Psoas muscle (tissue), 8 donors: ENCODE measurements at regions of chr2 and their contacts with region 1.

Region 1: GRCh38 chr2:175937216-175937615 is 64.9 kb downstream of the LNPK start:
- DNase-seq: no peak
- ATAC-seq: no peak
- H3K4me3 ChIP-seq: no peak overlapping the region
- H3K27ac ChIP-seq: no peak overlapping the region
- H3K4me1 ChIP-seq: peaks cover 1% of the 10 kb centered on the region
- H3K27me3 ChIP-seq: no peaks in the 10 kb centered on the region
- CTCF ChIP-seq: no peak

Region 2: DNA sequence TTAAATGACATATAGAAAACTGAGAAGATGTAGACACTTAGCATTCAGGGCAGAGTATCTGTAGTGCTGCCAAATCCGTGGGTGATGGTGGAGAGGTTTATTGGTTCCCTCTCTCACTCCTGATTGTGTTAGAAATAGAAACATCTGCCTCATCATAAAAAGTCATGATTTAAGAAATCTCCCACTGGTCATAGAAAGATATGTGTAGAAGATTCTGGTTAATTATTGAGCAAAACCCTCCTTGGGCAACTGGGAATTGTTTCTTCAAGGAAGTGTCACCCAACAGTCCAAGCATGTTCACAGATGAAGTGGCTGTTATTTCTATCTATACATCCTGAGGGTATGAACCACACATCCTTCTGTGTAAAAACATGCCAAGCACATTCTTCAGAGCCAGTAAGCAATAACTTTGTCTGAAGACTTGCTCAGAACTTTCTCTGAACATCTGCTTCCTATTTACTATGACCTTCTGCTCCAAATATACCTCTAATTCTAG is 1139.4 kb before region 1 on chr2:
- intact Hi-C with region 1: no loop called
- DNase-seq: no peak
- ATAC-seq: no peak
- H3K4me3 ChIP-seq: no peak overlapping the region
- H3K27ac ChIP-seq: no peak overlapping the region
- H3K4me1 ChIP-seq: no peaks in the 10 kb centered on the region
- H3K27me3 ChIP-seq: no peaks in the 10 kb centered on the region
- CTCF ChIP-seq: no peak

Region 3: DNA sequence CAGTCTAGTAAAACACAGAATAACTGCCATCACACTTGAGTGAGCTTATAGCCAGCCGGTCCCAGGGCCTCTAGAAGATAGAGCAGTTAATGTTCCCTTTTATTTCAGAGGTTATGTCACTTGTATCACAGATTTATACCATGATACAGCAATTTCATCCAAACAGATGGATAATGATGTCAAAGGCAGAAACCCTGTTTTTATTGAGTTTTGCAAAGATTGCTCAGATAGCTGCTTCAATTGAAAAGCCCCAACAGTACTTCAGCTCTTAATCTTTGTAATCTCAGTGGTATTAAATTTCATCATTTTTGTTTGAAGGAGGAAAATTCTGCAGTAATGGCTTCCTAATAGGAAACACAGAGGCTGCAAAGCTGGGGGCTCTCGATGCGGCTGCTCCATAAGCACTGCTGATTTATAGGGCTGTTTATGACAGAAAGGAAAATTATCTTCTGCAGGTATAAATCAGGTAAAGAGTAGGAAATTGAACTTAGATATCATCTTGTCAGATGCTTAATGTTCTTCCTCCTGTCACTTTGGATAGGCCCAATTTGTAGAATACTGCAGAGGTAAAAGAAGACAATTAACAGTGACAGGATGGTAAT is 47.4 kb before region 1 on chr2:
- intact Hi-C with region 1: no loop called
- DNase-seq: no peak
- ATAC-seq: no peak
- H3K4me3 ChIP-seq: no peak overlapping the region
- H3K27ac ChIP-seq: no peak overlapping the region
- H3K4me1 ChIP-seq: peaks cover 8% of the 10 kb centered on the region
- H3K27me3 ChIP-seq: peaks cover 0 to 1% (median 0%) of the 10 kb centered on the region in 3 donors
- CTCF ChIP-seq: no peak

Region 4: GRCh38 chr2:175981551-175981950 is 44.3 kb after region 1 on chr2:
- intact Hi-C with region 1: no loop called
- DNase-seq: no peak
- ATAC-seq: no peak
- H3K4me3 ChIP-seq: no peak overlapping the region
- H3K27ac ChIP-seq: no peak overlapping the region
- H3K4me1 ChIP-seq: no peaks in the 10 kb centered on the region
- H3K27me3 ChIP-seq: no peaks in the 10 kb centered on the region
- CTCF ChIP-seq: no peak

Region 5: DNA sequence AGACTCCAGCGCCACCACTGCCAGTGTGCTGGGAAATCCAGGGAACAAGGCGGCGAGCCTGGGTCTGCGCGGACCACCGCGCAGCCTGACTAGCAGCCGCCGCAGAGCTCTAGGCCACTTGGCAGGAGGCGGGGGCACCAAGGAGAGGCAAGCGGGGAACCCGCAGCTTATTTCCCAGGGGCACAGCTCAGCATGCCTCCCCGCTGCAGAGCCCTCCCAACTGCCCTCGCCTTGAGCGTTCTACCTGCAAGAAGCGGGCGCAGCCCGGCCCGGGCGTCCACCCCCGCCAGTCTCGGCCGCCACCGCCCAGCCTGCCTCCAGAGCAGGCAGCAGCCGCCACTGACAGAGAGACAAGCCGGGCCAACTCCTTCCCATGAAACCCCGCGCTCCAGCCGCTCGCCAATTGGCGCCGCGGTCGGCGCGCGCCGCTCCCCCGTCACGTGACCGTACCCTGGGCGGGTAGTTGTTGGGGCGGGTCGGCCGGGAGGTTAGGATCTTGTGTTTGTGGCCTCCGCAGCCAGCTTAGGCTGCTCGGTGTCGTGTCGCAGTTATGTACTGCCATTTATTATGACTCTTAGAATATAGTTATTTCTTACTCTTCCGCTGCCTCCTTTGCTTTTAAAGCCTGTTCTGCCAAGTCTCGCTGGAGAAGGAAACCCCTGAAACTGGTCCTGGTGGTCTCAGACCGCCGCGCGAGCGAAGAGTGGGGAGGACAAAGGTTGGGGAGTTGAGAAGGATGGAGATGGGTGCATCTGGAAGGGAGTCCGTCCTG is 64.9 kb after region 1 on chr2 and contains the start of gene LNPK:
- intact Hi-C with region 1: loop called (anchors 5 kb)
- DNase-seq: peak; percentile 93 to 97
- ATAC-seq: peak; percentile 91 to 95 (median 93)
- H3K4me3 ChIP-seq: peak within 1 kb of the TSS; percentile 91
- H3K27ac ChIP-seq: peak within 1 kb of the TSS; percentile 98
- H3K4me1 ChIP-seq: peaks cover 42% of the 10 kb centered on the region
- H3K27me3 ChIP-seq: no peaks in the 10 kb centered on the region
- CTCF ChIP-seq: no peak
- total RNA-seq, gene LNPK: 42.1 to 65.6 (median 51.4) TPM

Region 6: DNA sequence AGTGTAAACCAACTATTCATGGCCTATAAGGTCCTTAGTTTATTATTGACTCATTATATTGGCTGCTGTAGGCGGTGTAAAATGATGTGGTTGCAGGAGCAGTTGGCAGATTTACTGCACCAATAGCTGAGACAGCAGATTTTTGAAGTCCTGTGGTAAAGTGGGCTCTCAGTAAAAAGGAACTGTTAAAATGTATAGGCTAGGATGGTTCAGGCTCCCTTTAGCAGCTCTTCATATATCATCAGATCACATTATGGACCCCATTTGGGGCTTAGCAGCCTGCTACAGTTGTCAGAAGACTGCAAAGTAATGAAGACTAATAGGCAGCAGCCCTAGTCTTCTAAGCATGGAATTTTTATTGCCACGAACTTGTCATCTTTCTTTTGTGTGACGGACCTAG is 359.9 kb after region 1 on chr2:
- intact Hi-C with region 1: no loop called
- DNase-seq: no peak
- ATAC-seq: no peak
- H3K4me3 ChIP-seq: no peak overlapping the region
- H3K27ac ChIP-seq: no peak overlapping the region
- H3K4me1 ChIP-seq: peaks cover 31% of the 10 kb centered on the region
- H3K27me3 ChIP-seq: no peaks in the 10 kb centered on the region
- CTCF ChIP-seq: no peak